ENCODE measurements at regions of chr2 and their contacts with region 1.

Region 1: DNA sequence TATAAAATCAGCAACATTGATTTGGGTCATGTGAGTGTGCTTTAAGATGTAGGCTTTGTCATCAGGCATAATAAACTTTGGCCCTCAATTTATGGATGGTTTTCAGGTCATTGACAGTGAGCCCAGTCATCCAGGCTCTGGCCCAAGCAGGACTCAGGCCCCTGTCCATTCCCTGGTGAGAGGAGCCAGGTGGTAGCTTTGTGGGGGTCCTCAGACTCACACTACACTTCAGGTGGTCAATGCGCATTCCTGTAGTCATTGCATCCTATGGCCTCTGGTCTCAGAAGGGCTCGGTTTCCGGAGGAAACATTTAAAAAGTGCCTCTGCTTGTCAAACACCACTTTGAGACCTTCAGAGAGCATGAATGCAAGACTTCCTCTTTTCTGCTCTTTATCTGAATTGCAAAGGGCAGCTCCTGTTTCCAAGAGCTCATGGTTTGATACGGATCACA is 20.2 kb downstream of the LGALSL start:
- DNase-seq: no peak
- ATAC-seq: peak; percentile 84
- H3K4me3 Mint-ChIP-seq: peak overlapping the region; percentile 45
- H3K27ac Mint-ChIP-seq: peak overlapping the region; percentile 44
- H3K4me1 Mint-ChIP-seq: peaks cover 13% of the 10 kb centered on the region
- H3K27me3 Mint-ChIP-seq: no peaks in the 10 kb centered on the region
- CTCF ChIP-seq: no peak

Region 2: GRCh38 chr2:64404002-64404731 is 70.0 kb before region 1 on chr2:
- CTCF ChIA-PET with region 1: no interaction called
- POLR2A ChIA-PET with region 1: no interaction called
- intact Hi-C with region 1: no loop called
- DNase-seq: no peak
- ATAC-seq: no peak
- H3K4me3 Mint-ChIP-seq: no peak overlapping the region
- H3K27ac Mint-ChIP-seq: no peak overlapping the region
- H3K4me1 Mint-ChIP-seq: peaks cover 11% of the 10 kb centered on the region
- H3K27me3 Mint-ChIP-seq: peaks cover 3% of the 10 kb centered on the region
- CTCF ChIP-seq: no peak

Region 3: GRCh38 chr2:64453770-64454385 is 20.3 kb before region 1 on chr2 and contains the start of gene LGALSL:
- CTCF ChIA-PET with region 1: interaction called, 3 read pairs
- POLR2A ChIA-PET with region 1: interaction called, 3 read pairs
- intact Hi-C with region 1: loop called (anchors 2 kb)
- DNase-seq: peak; percentile 57
- ATAC-seq: peak; percentile 69
- H3K4me3 Mint-ChIP-seq: peak within 1 kb of the TSS; percentile 86
- H3K27ac Mint-ChIP-seq: peak within 1 kb of the TSS; percentile 75
- H3K4me1 Mint-ChIP-seq: peaks cover 9% of the 10 kb centered on the region
- H3K27me3 Mint-ChIP-seq: no peaks in the 10 kb centered on the region
- CTCF ChIP-seq: no peak
- total RNA-seq, gene LGALSL: 1.5 and 2.2 TPM in 2 replicates

Region 4: DNA sequence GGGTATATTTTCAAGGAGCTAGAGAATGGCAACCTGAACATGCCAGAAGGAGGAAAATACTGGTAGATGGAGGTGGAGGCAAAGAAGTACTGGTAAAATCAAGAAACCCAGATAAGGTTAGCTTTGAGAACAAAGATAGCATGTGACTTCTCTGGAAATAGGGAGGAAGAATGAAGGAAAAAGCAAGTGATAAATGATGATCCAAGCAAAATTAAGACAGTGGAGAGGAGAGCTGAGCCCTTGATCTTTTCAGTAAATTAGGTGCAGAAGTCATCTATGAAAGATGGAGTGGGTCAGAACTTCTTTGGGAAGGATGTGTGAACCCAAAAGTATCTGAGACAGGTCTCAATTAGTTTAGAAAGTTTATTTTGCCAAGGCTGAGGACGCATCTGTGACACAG is 24.3 kb after region 1 on chr2:
- CTCF ChIA-PET with region 1: no interaction called
- POLR2A ChIA-PET with region 1: no interaction called
- intact Hi-C with region 1: no loop called
- DNase-seq: no peak
- ATAC-seq: no peak
- H3K4me3 Mint-ChIP-seq: no peak overlapping the region
- H3K27ac Mint-ChIP-seq: no peak overlapping the region
- H3K4me1 Mint-ChIP-seq: no peaks in the 10 kb centered on the region
- H3K27me3 Mint-ChIP-seq: peaks cover 14% of the 10 kb centered on the region
- CTCF ChIP-seq: no peak

Region 5: DNA sequence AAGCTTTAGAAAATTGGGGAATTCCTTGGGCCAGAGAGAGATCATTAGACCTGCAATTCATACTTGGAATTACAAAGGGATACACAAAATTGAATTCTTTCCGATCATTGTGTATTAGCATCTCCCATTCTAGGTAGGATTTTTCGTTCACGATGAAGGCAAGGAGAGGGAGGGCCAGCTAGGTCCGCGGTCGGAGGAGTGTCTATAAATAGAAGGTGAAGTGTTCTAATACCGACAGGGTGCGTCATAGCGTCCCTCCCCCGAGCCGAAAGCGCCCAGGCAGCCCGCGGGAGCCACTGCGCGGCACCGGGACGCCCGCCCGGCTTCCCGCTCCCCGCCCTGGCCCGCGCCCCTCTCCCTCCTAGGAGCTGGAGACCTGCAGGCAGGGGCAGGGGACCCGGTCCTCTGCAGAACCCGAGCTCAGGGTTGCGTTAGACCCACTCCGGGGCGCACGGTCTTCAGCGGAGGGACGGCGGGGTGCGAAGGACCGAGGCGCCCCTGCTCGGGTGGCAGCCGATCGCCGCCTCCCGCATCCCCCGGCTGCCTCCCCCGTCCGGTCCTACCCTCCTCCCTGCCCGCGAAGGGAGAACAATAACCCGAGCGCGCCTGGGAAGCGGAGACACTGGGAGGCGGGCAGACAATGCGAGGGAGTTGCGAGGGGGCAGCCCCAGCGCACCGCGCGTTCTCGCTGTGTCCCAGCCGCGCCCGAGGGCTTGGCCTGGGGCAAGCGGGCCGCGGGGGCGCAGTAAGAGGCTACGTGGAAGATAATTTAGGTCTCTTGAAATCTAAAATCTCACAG is 293.7 kb after region 1 on chr2:
- CTCF ChIA-PET with region 1: no interaction called
- POLR2A ChIA-PET with region 1: no interaction called
- intact Hi-C with region 1: no loop called
- DNase-seq: peak; percentile 76
- ATAC-seq: peak; percentile 81
- H3K4me3 Mint-ChIP-seq: peak overlapping the region; percentile 88
- H3K27ac Mint-ChIP-seq: peak overlapping the region; percentile 96
- H3K4me1 Mint-ChIP-seq: peaks cover 21% of the 10 kb centered on the region
- H3K27me3 Mint-ChIP-seq: no peaks in the 10 kb centered on the region
- CTCF ChIP-seq: no peak